ENCODE measurements at regions of chr11 and their contacts with region 1.

Region 1: DNA sequence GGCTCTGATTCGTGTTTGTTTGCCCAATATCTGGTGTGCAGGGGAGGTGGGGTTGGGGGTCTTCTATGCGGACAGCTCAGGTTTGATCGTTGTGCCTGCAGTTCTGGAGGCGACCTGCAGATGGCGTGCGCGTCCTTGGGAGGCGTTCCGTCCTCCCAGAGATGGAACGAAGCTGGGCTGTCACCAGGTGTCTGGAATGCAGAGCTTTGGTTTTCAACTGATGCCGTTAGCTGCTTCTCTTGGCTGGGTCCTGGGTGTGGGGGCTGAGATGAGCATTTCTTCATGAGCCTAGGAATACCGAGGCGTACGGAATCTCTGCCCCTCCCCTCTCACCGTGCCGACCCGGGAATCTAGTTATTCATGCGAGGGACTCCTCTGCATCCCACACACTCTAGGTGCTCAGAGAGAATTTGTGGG is 98.6 kb downstream of the CEP164 start:
- DNase-seq: peak; percentile 78 to 90

Region 2: GRCh38 chr11:117817368-117818040 is 391.2 kb after region 1 on chr11:
- in situ Hi-C with region 1: loop called (anchors 25 kb)
- DNase-seq: peak; percentile 41 to 76